IMR-90 (cell line): ENCODE measurements at regions of chr3 and their contacts with region 1.

Region 1: GRCh38 chr3:43690400-43691119 is at the start of gene ABHD5:
- DNase-seq: peak; percentile 95
- ATAC-seq: peak; percentile 90
- H3K4me3 ChIP-seq: peak within 1 kb of the TSS; percentile 87
- H3K27ac ChIP-seq: peak within 1 kb of the TSS; percentile 66
- H3K4me1 ChIP-seq: peaks cover 6% of the 10 kb centered on the region
- H3K27me3 ChIP-seq: no peaks in the 10 kb centered on the region
- CTCF ChIP-seq: peak; percentile 41; the same call in 1 of the 2 replicates
- POLR2A ChIP-seq: peak; percentile 99
- RAD21 ChIP-seq: peak; percentile 27
- total RNA-seq, gene ABHD5: 33.2 and 33.6 TPM in 2 replicates

Region 2: GRCh38 chr3:43180027-43180426 is 510.5 kb before region 1 on chr3:
- CTCF ChIA-PET with region 1: no interaction called
- POLR2A ChIA-PET with region 1: no interaction called
- dilution Hi-C with region 1: no loop called
- in situ Hi-C with region 1: no loop called
- intact Hi-C with region 1: no loop called
- DNase-seq: peak; percentile 96
- ATAC-seq: peak; percentile 94
- H3K4me3 ChIP-seq: no peak overlapping the region
- H3K27ac ChIP-seq: peak overlapping the region; percentile 68
- H3K4me1 ChIP-seq: peaks cover 18% of the 10 kb centered on the region
- H3K27me3 ChIP-seq: no peaks in the 10 kb centered on the region
- CTCF ChIP-seq: no peak
- POLR2A ChIP-seq: no peak
- RAD21 ChIP-seq: no peak

Region 3: GRCh38 chr3:43223670-43224364 is 466.7 kb before region 1 on chr3:
- CTCF ChIA-PET with region 1: no interaction called
- POLR2A ChIA-PET with region 1: no interaction called
- dilution Hi-C with region 1: no loop called
- in situ Hi-C with region 1: no loop called
- intact Hi-C with region 1: loop called (anchors 5 kb)
- DNase-seq: peak; percentile 27
- ATAC-seq: peak; percentile 27; the same call in 1 of the 2 replicates
- H3K4me3 ChIP-seq: no peak overlapping the region
- H3K27ac ChIP-seq: no peak overlapping the region
- H3K4me1 ChIP-seq: no peaks in the 10 kb centered on the region
- H3K27me3 ChIP-seq: peaks cover 6% of the 10 kb centered on the region; the same call in 1 of the 2 replicates
- CTCF ChIP-seq: peak; percentile 64
- POLR2A ChIP-seq: no peak
- RAD21 ChIP-seq: peak; percentile 70

Region 4: GRCh38 chr3:43769471-43770425 is 79.2 kb after region 1 on chr3:
- CTCF ChIA-PET with region 1: interaction called, 5 read pairs
- POLR2A ChIA-PET with region 1: no interaction called
- dilution Hi-C with region 1: no loop called
- in situ Hi-C with region 1: no loop called
- intact Hi-C with region 1: loop called (anchors 1 kb)
- DNase-seq: peak; percentile 91
- ATAC-seq: peak; percentile 97
- H3K4me3 ChIP-seq: no peak overlapping the region
- H3K27ac ChIP-seq: no peak overlapping the region
- H3K4me1 ChIP-seq: peaks cover 31% of the 10 kb centered on the region
- H3K27me3 ChIP-seq: no peaks in the 10 kb centered on the region
- CTCF ChIP-seq: peak; percentile 92
- POLR2A ChIP-seq: no peak
- RAD21 ChIP-seq: peak; percentile 77

Region 5: GRCh38 chr3:43870120-43870519 is 179.6 kb after region 1 on chr3:
- CTCF ChIA-PET with region 1: no interaction called
- POLR2A ChIA-PET with region 1: no interaction called
- dilution Hi-C with region 1: no loop called
- in situ Hi-C with region 1: no loop called
- intact Hi-C with region 1: loop called (anchors 5 kb)
- DNase-seq: peak; percentile 69
- ATAC-seq: peak; percentile 65
- H3K4me3 ChIP-seq: no peak overlapping the region
- H3K27ac ChIP-seq: peak overlapping the region; percentile 3
- H3K4me1 ChIP-seq: peaks cover 38% of the 10 kb centered on the region
- H3K27me3 ChIP-seq: no peaks in the 10 kb centered on the region
- CTCF ChIP-seq: no peak
- POLR2A ChIP-seq: no peak
- RAD21 ChIP-seq: no peak